HEK293 (cell line): ENCODE measurements at regions of chr16 and their contacts with region 1.

Region 1: GRCh38 chr16:3282730-3283524 is at the start of gene ZNF263:
- H3K4me3 ChIP-seq: peak within 1 kb of the TSS; percentile 74
- H3K27ac ChIP-seq: peak within 1 kb of the TSS; percentile 94
- H3K4me1 ChIP-seq: no peaks in the 10 kb centered on the region
- CTCF ChIP-seq: no peak

Region 2: GRCh38 chr16:3234543-3235541 is 48.1 kb before region 1 on chr16 and contains the start of gene ZNF200:
- CTCF ChIA-PET with region 1: no interaction called
- POLR2A ChIA-PET with region 1: interaction called, 12 read pairs
- H3K4me3 ChIP-seq: peak within 1 kb of the TSS; percentile 95
- H3K27ac ChIP-seq: peak within 1 kb of the TSS; percentile 80
- H3K4me1 ChIP-seq: 0 out of 2 replicates have a peak, but pooled peaks cover 2% of the 10 kb centered on the region
- CTCF ChIP-seq: no peak

Region 3: GRCh38 chr16:3264137-3265036 is 18.5 kb before region 1 on chr16:
- CTCF ChIA-PET with region 1: interaction called, 35 read pairs
- POLR2A ChIA-PET with region 1: interaction called, 16 read pairs
- H3K4me3 ChIP-seq: peak overlapping the region; percentile 73
- H3K27ac ChIP-seq: peak overlapping the region; percentile 69
- H3K4me1 ChIP-seq: no peaks in the 10 kb centered on the region
- CTCF ChIP-seq: peak; percentile 71; the same call in 1 of the 2 replicates

Region 4: DNA sequence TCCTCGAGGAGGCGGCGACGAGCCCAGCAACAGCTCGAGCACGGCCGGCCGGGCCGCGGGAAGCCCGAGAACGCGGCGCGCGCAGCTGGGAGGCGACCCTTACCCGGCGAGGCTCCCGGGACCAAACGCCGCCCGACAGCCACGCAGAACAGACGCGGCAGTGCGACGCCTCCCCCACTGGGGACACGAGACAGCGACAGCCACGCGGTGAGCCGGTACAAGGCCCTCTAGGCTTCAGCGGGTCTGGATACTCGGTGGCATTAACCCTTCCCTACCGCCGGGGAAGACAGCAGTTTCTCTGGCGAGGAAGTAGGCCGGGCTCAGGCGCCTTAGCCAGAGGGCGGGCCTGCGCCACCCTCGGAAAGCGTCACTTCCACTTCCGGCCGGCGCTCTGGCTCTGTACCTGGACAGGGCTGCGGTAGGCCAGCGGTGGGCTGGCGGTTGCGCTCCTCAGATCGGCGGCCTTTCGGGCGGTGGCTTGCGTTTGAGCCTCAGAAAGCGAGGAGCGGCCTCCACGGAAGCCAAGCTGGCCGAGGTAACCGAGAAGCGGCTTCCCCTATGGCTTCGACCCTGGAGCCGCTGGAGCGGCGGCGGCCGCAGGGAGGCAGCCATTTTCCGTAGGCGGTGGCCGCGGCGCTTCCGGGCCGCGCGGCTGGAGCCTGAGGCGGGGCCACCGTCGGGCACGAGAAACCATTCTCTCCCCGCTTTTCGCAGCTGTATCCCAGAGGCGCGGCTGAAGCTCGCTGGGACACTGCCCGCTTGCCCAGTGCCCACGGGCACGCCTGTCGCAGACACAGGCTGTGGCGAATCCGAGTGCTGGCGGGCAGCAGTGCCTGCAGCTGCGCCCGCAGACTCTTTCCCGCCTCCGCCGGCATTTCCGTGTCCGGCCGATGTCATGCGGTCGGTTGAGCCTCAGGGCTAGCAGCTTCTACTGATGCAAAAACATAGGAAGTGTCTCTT is 22.5 kb after region 1 on chr16 and contains the starts of genes TIGD7 and ZNF75A:
- CTCF ChIA-PET with region 1: no interaction called
- POLR2A ChIA-PET with region 1: interaction called, 21 read pairs
- H3K4me3 ChIP-seq: peak within 1 kb of the TSS; percentile 77
- H3K27ac ChIP-seq: peak within 1 kb of the TSS; percentile 64
- H3K4me1 ChIP-seq: no peaks in the 10 kb centered on the region
- CTCF ChIP-seq: peak; percentile 31; the same call in 1 of the 2 replicates

Region 5: DNA sequence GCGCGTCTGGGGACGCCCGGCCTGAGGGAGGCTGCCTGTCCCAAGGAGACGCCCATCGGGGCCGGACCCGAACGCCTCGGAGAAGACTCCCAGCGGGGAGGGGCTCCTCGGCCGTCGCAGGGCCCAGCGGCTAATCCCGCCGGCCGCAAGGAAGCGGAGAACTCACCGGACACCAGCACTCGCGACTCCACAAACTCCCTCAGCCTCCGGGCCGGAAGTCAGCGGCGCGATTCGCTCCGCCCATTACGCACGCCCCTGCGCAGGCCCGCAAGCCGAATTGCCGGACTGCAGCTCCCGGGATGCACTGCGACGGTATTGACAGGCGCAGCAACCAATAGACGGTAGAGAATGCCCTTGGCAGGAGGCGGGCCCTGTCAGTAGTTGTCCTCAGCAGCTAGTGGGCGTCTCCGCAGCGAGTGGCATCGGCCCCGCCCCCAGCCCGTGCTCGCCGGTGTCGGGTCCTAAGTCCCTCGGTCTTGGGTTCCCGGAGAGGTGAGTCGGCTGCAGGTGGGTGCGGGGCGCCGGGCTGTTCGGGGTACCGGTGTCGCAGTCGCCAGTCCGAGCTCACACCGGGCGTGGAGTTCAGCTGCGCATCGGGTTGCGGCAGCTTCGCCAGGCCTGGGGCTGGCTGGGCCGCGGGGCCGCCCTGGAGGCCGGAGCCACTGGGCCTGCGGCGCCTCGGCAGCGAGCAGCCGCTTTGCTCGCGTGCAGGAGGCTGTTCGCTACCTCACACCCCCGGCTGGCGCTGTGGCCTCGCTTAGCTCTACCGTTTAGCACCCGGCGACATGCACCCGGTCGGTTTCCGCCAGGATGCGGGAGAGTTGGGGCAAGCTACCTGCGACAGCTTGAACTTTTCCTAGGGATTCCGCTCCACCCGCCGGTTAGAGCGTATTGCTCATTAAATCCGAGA is 118.1 kb after region 1 on chr16 and contains the starts of genes ZNF174 and ZSCAN32:
- CTCF ChIA-PET with region 1: no interaction called
- POLR2A ChIA-PET with region 1: interaction called, 15 read pairs
- H3K4me3 ChIP-seq: peak within 1 kb of the TSS; percentile 95
- H3K27ac ChIP-seq: peak within 1 kb of the TSS; percentile 71; the same call in 1 of the 2 replicates
- H3K4me1 ChIP-seq: no peaks in the 10 kb centered on the region
- CTCF ChIP-seq: peak; percentile 70

Region 6: DNA sequence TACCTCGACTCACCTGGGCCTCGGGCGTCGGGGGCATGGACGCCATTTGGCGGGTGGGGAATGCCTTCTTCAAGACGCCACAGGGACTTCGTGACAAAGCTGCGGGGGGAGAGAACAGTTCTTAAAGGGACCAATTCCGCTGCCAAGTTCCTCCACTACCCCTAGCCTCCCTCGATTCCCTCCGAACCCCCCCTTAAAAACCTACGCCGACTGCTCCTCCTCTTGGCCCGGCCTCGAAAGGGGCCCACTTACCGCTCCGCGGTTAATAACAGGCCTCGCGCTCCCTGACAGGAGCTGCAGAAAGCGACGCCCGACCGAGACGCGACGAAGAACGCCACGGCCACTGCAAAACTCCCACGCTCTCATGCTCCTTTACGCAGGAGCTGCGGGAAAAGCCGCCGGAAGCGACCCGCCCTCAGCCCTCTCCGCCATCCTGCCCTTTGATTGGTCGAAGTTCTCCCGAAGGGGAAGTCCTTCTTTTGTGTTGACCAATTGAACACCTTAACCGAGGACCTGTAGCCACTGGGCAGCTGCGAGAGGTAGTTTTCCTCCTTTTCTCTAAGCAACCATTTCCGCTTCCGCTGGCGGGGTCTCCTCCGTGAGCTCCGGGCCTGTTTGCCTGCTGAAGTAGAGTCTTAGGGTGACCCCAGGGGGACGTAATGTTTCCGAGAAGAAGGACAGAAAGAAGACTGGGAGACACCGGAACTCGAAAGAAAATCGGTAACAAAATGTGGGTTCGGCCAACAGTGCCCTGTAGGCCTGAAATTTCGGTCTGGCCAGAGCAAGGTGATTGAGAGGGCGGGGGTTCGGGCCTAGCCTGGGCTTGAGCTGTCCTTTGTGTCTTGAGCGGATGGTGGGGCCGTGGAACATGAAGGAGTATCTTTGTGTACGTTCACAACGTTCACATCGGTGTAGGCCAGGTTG is 160.4 kb after region 1 on chr16 and contains the starts of genes NAA60 and ZNF597:
- CTCF ChIA-PET with region 1: no interaction called
- POLR2A ChIA-PET with region 1: interaction called, 19 read pairs
- H3K4me3 ChIP-seq: peak within 1 kb of the TSS; percentile 61
- H3K27ac ChIP-seq: peak within 1 kb of the TSS; percentile 32; the same call in 1 of the 2 replicates
- H3K4me1 ChIP-seq: no peaks in the 10 kb centered on the region
- CTCF ChIP-seq: no peak; the same call in 1 of the 2 replicates